Right ventricle myocardium inferior (tissue), 1 donor: ENCODE measurements at regions of chr18 and their contacts with region 1.

Region 1: DNA sequence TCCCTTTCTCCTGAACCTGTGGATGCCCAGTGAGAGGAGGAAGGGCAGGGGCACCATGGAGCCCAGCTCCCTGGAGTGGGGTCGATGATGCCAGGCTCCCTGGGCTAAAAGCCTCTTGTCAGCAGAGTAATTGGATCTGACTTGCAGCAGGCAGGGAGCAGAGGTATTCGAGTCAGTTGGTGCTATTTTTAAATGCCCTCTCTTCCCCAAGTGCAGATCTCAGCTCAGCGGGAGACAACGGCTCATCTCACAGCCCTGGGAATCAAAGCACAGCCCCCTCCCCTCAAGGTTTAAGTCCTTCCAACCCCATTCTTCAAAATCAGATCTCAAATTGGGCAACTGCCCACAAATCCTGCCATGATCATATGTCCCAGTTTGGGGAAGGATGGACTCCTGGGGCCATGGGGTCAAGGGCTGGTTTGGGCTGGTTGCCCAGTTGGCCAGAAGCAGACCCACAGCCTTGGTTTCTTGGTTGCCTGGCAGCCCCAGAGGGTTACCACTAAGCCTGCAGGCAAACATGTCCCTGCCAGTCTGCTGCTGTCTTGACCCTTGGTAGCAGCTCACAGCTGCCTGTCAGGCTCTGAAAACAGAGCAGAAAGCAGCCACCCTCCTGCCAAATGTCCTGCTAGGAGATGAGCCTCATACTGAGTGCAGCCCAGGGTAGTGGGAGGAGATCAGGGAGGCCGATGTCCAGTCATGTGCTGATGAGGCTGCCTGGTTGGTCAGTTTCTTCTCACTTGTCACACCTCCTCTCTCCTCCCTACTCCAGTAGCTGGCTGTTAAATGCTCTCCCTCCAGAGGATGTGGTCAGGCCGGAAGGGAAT is 244.9 kb downstream of the LOXHD1 start:
- DNase-seq: peak; percentile 70
- ATAC-seq: peak; percentile 80

Region 2: GRCh38 chr18:46333431-46334135 is 78.5 kb before region 1 on chr18:
- intact Hi-C with region 1: loop called (anchors 2 kb)
- DNase-seq: no peak
- ATAC-seq: peak; percentile 78

Region 3: DNA sequence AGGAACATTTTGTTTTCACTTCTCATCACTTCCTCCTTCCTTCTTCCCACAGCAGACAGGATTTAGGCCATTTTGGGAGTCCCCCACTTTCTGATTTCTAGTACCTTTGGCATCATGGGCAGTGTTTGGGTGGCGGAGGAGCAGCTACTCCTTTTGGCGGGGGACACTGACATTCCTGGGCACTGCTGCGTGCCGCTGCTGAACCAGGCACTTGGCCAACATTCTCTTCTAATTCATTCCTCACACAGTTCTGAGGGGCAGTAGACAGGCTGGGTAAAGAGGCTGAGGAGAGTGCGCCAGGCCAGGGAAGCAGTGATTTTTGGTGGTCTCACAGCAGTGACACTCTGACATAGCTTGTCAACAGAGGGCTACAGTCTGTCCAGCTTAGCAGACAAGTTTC is 25.3 kb before region 1 on chr18:
- intact Hi-C with region 1: loop called (anchors 1 kb)
- DNase-seq: no peak
- ATAC-seq: peak; percentile 90